Gastrocnemius medialis (tissue), 4 donors: ENCODE measurements at regions of chr6 and their contacts with region 1.

Region 1: DNA sequence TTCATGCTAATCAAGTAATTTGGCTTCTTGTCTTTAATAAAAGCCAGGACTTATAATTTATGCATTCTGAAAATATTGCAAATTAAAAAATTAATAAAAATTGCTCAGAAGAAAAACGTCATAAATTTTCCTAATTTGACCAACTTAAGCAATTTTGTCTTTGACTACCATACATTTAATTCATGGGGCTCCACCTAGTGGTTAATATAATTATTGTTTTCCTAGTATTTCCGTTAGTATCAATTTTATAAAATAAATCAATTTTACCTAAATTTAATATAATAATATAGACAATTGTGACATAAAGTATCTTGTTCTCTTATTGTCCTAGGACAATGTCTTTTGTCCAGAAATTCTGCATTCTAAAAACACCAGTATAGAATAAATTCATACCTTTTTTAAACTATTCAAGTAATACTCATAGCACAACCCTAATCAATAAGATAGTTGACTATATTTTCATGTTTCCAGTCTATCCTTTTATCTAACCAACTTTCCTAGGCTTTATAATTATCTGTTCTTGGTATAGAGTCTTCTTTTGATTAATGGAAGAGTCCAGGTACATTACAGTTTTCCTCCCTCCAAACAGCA is 319.9 kb downstream of the TRDN start:
- DNase-seq: no peak
- ATAC-seq: no peak
- H3K4me3 ChIP-seq: no peak overlapping the region
- H3K27ac ChIP-seq: no peak overlapping the region
- H3K4me1 ChIP-seq: no peaks in the 10 kb centered on the region
- H3K27me3 ChIP-seq: no peaks in the 10 kb centered on the region
- CTCF ChIP-seq: peak in 4 of 5 experiments; percentile 15 to 71 (median 54)
- POLR2A ChIP-seq: no peak

Region 2: DNA sequence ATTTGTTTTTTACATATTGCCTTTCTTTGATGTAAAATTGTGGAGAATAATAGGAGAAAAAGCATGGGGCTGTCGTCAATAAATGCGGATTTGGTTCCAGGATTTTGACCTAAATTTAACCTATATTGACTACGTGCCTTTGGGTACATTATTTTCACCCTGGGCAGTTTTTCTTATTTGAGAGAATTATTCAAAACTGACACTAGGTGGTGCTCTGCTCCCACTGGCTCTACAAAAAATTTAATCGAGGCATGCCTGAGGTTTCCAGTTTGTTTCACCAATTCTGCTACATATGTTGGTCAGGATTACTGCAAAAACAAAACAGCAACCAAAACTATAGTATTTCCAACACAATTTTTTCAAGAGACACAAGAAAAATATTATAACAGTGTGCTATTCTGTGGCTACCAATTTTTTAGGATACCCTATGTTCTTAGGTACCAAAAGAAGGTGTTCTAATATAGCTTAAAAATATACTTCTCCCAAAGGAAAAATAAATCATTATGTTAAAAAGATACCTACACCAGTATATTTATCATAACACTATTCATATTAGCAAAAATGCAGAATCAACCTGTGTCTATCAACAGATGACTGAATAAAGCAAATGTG is 585.9 kb before region 1 on chr6:
- in situ Hi-C with region 1: loop called in 2 of 4 experiments (anchors 25 kb)
- intact Hi-C with region 1: loop called (anchors 10 kb)
- DNase-seq: no peak
- ATAC-seq: peak; percentile 62
- H3K4me3 ChIP-seq: no peak overlapping the region
- H3K27ac ChIP-seq: no peak overlapping the region
- H3K4me1 ChIP-seq: peaks cover 5 to 9% of the 10 kb centered on the region in 2 donors
- H3K27me3 ChIP-seq: no peaks in the 10 kb centered on the region
- CTCF ChIP-seq: peak; percentile 68 to 88 (median 73)
- POLR2A ChIP-seq: no peak

Region 3: GRCh38 chr6:122869437-122870024 is 447.3 kb before region 1 on chr6:
- in situ Hi-C with region 1: loop called in 3 of 4 experiments (anchors 5 to 10 kb)
- intact Hi-C with region 1: loop called (anchors 2 kb)
- DNase-seq: peak; percentile 7 to 39
- ATAC-seq: peak; percentile 97 to 98
- H3K4me3 ChIP-seq: no peak overlapping the region
- H3K27ac ChIP-seq: no peak overlapping the region
- H3K4me1 ChIP-seq: peaks cover 0 to 4% of the 10 kb centered on the region in 2 donors
- H3K27me3 ChIP-seq: no peaks in the 10 kb centered on the region
- CTCF ChIP-seq: peak; percentile 46 to 70 (median 63)
- POLR2A ChIP-seq: no peak

Region 4: GRCh38 chr6:122878796-122879195 is 438.0 kb before region 1 on chr6:
- in situ Hi-C with region 1: loop called in 2 of 4 experiments (anchors 10 to 25 kb)
- intact Hi-C with region 1: no loop called
- DNase-seq: no peak
- ATAC-seq: no peak
- H3K4me3 ChIP-seq: no peak overlapping the region
- H3K27ac ChIP-seq: no peak overlapping the region
- H3K4me1 ChIP-seq: peaks cover 0 to 4% of the 10 kb centered on the region in 2 donors
- H3K27me3 ChIP-seq: no peaks in the 10 kb centered on the region
- CTCF ChIP-seq: no peak
- POLR2A ChIP-seq: no peak

Region 5: GRCh38 chr6:122947355-122947754 is 369.5 kb before region 1 on chr6:
- in situ Hi-C with region 1: no loop called
- intact Hi-C with region 1: loop called (anchors 2 kb)
- DNase-seq: no peak
- ATAC-seq: no peak
- H3K4me3 ChIP-seq: no peak overlapping the region
- H3K27ac ChIP-seq: no peak overlapping the region
- H3K4me1 ChIP-seq: no peaks in the 10 kb centered on the region
- H3K27me3 ChIP-seq: no peaks in the 10 kb centered on the region
- CTCF ChIP-seq: peak in 4 of 5 experiments; percentile 43 to 49 (median 46)
- POLR2A ChIP-seq: no peak

Region 6: GRCh38 chr6:123570813-123571684 is 254.2 kb after region 1 on chr6:
- in situ Hi-C with region 1: no loop called
- intact Hi-C with region 1: no loop called
- DNase-seq: peak in 1 of 2 donors; percentile 41
- ATAC-seq: peak; percentile 67 to 78
- H3K4me3 ChIP-seq: peak overlapping the region in 3 of 4 donors; percentile 3 to 43 (median 27)
- H3K27ac ChIP-seq: peak overlapping the region; percentile 45 to 81 (median 76)
- H3K4me1 ChIP-seq: peaks cover 38 to 56% of the 10 kb centered on the region in 2 donors
- H3K27me3 ChIP-seq: no peaks in the 10 kb centered on the region
- CTCF ChIP-seq: no peak
- POLR2A ChIP-seq: no peak